ENCODE measurements at regions of chr16 and their contacts with region 1.

Region 1: GRCh38 chr16:59758848-59759247 is 1024.7 kb upstream of the GOT2 start:
- DNase-seq: no peak
- ATAC-seq: no peak
- H3K4me3 ChIP-seq: no peak overlapping the region
- H3K27ac ChIP-seq: no peak overlapping the region
- H3K4me1 ChIP-seq: no peaks in the 10 kb centered on the region
- H3K27me3 ChIP-seq: no peaks in the 10 kb centered on the region
- CTCF ChIP-seq: no peak

Region 2: GRCh38 chr16:59707436-59708226 is 51.2 kb before region 1 on chr16:
- intact Hi-C with region 1: no loop called
- DNase-seq: no peak
- ATAC-seq: no peak
- H3K4me3 ChIP-seq: no peak overlapping the region
- H3K27ac ChIP-seq: no peak overlapping the region
- H3K4me1 ChIP-seq: no peaks in the 10 kb centered on the region
- H3K27me3 ChIP-seq: no peaks in the 10 kb centered on the region
- CTCF ChIP-seq: no peak

Region 3: GRCh38 chr16:59826767-59827166 is 67.9 kb after region 1 on chr16:
- intact Hi-C with region 1: loop called in 1 of 2 experiments (anchors 10 kb)
- DNase-seq: no peak
- ATAC-seq: no peak
- H3K4me3 ChIP-seq: no peak overlapping the region
- H3K27ac ChIP-seq: no peak overlapping the region
- H3K4me1 ChIP-seq: no peaks in the 10 kb centered on the region
- H3K27me3 ChIP-seq: no peaks in the 10 kb centered on the region
- CTCF ChIP-seq: no peak